HEK293 (cell line): ENCODE measurements at regions of chr1 and their contacts with region 1.

Region 1: DNA sequence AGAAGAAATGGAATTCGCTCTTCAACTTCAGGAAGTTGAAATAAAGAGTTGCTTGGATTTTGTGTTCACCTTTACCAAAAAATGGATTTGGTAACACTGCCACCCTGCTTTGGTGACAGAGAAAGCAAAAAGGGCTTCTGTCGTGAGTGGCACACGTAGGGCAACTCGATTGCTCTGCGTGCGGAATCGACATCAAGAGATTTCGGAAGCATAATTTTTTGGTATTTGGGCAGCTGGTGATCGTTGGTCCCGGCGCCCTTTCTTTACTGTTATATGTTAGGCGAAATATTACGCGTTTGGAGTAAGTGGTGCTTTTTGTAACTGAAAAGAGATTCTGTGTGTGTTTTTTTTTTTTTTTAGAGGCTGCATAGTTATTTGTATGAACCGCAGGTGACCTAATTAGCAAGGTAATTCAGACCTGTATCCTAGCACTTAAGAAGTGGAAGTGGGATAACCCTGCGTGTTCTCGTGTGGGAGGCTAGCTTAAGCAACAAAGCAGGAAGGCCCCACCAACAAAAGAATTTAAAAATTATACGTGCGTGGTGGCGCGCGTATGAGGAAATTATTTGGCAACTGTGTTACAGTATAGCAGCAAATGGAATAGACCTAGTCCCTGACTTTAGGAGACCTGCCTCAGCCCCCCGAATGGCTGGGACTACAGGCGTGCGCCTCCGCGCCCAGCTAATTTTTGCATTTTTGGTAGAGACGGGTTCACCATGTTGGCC is at the start of gene RNU11:
- H3K4me3 ChIP-seq: peak within 1 kb of the TSS; percentile 40
- H3K27ac ChIP-seq: peak within 1 kb of the TSS; percentile 95
- H3K4me1 ChIP-seq: no peaks in the 10 kb centered on the region
- CTCF ChIP-seq: peak; percentile 28; the same call in 1 of the 2 replicates

Region 2: GRCh38 chr1:28417429-28417922 is 231.2 kb before region 1 on chr1:
- CTCF ChIA-PET with region 1: no interaction called
- POLR2A ChIA-PET with region 1: no interaction called
- H3K4me3 ChIP-seq: no peak overlapping the region
- H3K27ac ChIP-seq: no peak overlapping the region
- H3K4me1 ChIP-seq: peaks cover 15% of the 10 kb centered on the region
- CTCF ChIP-seq: no peak

Region 3: GRCh38 chr1:28571911-28572310 is 76.7 kb before region 1 on chr1:
- CTCF ChIA-PET with region 1: no interaction called
- POLR2A ChIA-PET with region 1: no interaction called
- H3K4me3 ChIP-seq: no peak overlapping the region
- H3K27ac ChIP-seq: no peak overlapping the region
- H3K4me1 ChIP-seq: no peaks in the 10 kb centered on the region
- CTCF ChIP-seq: no peak

Region 4: GRCh38 chr1:28680141-28680540 is 31.5 kb after region 1 on chr1:
- CTCF ChIA-PET with region 1: interaction called, 4 read pairs
- POLR2A ChIA-PET with region 1: interaction called, 11 read pairs
- H3K4me3 ChIP-seq: no peak overlapping the region
- H3K27ac ChIP-seq: no peak overlapping the region
- H3K4me1 ChIP-seq: no peaks in the 10 kb centered on the region
- CTCF ChIP-seq: no peak